B cell (primary cell): ENCODE measurements at regions of chr17 and their contacts with region 1.

Region 1: GRCh38 chr17:7280519-7281429 is 744 bp upstream of the SLC2A4 start:
- DNase-seq: peak; percentile 85
- ATAC-seq: peak; percentile 84
- H3K4me3 ChIP-seq: peak overlapping the region; percentile 2 to 69 (median 53)
- H3K4me3 Mint-ChIP-seq: peak overlapping the region; percentile 92
- H3K27ac ChIP-seq: no peak overlapping the region
- H3K27ac Mint-ChIP-seq: peak overlapping the region; percentile 76
- H3K4me1 ChIP-seq: peaks cover 20 to 31% of the 10 kb centered on the region in 2 donors
- H3K4me1 Mint-ChIP-seq: peaks cover 20% of the 10 kb centered on the region
- H3K27me3 ChIP-seq: peaks cover 0 to 46% (median 13%) of the 10 kb centered on the region in 4 experiments
- H3K27me3 Mint-ChIP-seq: peaks cover 18% of the 10 kb centered on the region
- CTCF ChIP-seq: peak; percentile 91

Region 2: DNA sequence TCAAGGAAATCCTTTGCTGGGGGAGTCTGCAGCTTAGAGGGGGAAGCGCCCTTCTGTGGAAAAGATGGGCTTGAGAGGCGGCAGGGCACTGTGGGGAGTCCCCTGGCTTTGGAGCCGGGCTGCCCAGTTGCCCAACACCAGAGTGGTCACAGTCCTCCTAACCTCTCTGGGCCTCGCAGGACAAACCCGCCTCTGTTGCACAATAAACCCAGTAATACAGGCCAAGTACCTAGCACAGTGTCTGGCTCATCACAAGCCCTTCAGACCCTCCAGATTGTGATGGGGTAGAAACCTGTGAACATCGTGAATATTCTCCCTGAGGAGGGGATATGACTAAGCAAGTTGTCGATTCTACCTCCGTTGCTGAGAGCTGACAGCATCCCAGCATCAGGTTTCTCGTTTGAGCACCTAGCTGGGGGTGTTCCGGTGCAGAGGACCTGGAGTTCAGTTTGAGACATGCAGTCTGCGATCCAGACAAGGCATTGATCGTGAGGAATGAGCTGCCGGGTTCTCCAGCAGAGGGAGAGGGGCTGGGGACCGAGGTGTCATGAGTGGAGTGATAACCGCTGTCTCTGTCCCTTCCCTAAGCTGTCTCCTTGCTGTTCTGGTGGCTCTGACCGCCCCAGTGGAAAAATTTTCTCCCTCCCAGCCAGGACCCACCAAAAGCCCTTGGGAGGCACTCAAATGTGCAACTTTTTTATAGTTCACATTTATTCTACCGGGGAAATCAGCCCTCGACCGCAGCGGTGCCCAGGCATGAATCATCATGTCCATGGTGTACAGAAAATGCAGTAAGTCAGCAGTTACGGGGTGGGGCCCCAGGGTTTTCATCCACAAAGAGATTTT is 1048.7 kb before region 1 on chr17:
- CTCF ChIA-PET with region 1: no interaction called
- POLR2A ChIA-PET with region 1: no interaction called
- intact Hi-C with region 1: no loop called
- DNase-seq: no peak
- ATAC-seq: no peak
- H3K4me3 ChIP-seq: no peak overlapping the region
- H3K4me3 Mint-ChIP-seq: no peak overlapping the region
- H3K27ac ChIP-seq: no peak overlapping the region
- H3K27ac Mint-ChIP-seq: no peak overlapping the region
- H3K4me1 ChIP-seq: no peaks in the 10 kb centered on the region
- H3K4me1 Mint-ChIP-seq: no peaks in the 10 kb centered on the region
- H3K27me3 ChIP-seq: no peaks in the 10 kb centered on the region
- H3K27me3 Mint-ChIP-seq: peaks cover 2% of the 10 kb centered on the region
- CTCF ChIP-seq: no peak

Region 3: DNA sequence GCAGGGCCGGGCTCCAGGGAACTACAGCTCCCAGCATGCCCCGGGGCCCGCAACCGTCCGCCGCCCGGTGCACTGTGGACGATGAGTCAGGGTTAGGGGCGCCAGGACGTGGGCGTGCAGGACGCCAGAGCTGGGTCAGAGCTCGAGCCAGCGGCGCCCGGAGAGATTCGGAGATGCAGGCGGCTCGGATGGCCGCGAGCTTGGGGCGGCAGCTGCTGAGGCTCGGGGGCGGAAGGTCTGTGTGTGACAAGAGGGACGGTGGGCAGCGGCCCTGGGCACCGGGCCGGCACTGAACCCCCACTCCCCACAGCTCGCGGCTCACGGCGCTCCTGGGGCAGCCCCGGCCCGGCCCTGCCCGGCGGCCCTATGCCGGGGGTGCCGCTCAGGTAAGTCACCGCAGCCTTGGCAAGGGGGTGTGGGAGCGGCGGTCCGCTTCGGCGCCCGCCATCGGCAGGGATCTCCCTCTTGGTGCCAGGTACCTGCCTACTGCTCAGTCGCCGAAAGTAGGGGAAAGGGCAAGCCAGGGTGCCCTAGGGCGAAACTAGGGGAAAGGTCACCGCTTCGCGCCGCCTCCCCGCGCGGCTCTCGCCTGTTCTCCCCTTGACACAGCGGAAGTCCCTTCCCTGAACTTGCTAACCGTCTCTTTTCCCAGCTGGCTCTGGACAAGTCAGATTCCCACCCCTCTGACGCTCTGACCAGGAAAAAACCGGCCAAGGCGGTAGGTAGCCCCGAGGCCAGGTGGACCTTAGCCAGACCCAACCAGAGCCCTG is 60.8 kb before region 1 on chr17 and contains the starts of genes ACADVL and DLG4:
- CTCF ChIA-PET with region 1: interaction called, 7 read pairs
- POLR2A ChIA-PET with region 1: no interaction called
- intact Hi-C with region 1: loop called (anchors 1 kb)
- DNase-seq: peak; percentile 78
- ATAC-seq: peak; percentile 76
- H3K4me3 ChIP-seq: peak within 1 kb of the TSS; percentile 31 to 86 (median 80)
- H3K4me3 Mint-ChIP-seq: peak within 1 kb of the TSS; percentile 97
- H3K27ac ChIP-seq: peak within 1 kb of the TSS; percentile 42 to 78
- H3K27ac Mint-ChIP-seq: peak within 1 kb of the TSS; percentile 93
- H3K4me1 ChIP-seq: peaks cover 20 to 47% of the 10 kb centered on the region in 2 donors
- H3K4me1 Mint-ChIP-seq: peaks cover 48% of the 10 kb centered on the region
- H3K27me3 ChIP-seq: no peaks in the 10 kb centered on the region
- H3K27me3 Mint-ChIP-seq: no peaks in the 10 kb centered on the region
- CTCF ChIP-seq: no peak
- total RNA-seq, gene ACADVL: 640 and 655 TPM in 2 replicates
- total RNA-seq, gene DLG4: 12.0 and 12.5 TPM in 2 replicates

Region 4: DNA sequence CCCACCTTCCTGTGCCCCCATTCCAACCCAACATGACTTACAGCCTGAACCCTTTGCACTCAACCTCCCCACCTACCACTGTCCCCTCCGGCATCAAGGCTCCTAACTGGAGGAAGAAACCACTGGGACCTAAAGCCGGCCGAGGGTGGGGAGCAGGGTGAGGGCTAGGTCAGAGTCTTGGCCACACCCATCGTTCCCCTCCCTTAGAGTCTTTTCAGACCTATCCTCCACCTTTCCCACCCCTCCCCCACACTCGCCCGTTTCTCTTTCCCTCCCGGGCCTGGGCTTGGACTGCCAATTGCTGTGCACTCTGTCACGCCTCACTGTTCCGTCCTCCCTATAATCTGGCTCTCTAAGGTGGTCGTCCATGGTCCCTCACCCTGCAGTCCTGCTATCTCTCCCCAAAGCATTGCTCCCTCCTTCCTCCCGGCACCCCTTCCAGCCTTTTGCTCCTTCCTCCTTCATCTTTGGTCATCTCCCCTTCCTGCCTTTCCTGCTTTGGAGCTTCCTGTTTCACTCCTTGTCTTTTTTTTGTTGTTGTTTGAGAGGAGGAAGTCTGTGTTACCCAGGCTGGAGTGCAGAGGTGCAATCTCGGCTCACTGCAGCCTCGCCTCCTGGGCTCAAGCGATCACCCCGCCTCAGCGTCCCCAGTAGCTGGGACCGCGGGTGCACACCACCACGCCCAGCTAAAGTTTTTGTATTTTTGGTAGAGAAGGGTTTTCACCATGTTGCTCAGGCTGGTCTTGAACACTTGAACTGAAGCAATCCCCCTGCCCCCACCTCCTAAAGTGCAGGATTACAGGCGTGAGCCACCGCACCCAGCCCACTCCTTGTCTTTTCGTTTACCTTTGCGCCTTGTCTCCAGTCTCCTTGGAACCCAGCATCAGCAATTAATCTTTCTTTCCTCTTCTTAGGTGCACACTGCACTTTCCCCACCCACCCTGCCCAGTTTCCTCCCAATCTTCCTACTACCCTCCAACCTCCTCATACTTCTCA is 17.4 kb before region 1 on chr17:
- CTCF ChIA-PET with region 1: interaction called, 3 read pairs
- POLR2A ChIA-PET with region 1: no interaction called
- intact Hi-C with region 1: loop called (anchors 2 kb)
- DNase-seq: no peak
- ATAC-seq: peak; percentile 16
- H3K4me3 ChIP-seq: peak overlapping the region in 4 of 5 experiments; percentile 20 to 38 (median 35)
- H3K4me3 Mint-ChIP-seq: peak overlapping the region; percentile 72
- H3K27ac ChIP-seq: no peak overlapping the region
- H3K27ac Mint-ChIP-seq: peak overlapping the region; percentile 66
- H3K4me1 ChIP-seq: peaks cover 27 to 32% of the 10 kb centered on the region in 2 donors
- H3K4me1 Mint-ChIP-seq: peaks cover 27% of the 10 kb centered on the region
- H3K27me3 ChIP-seq: peaks cover 0 to 17% (median 8%) of the 10 kb centered on the region in 4 experiments
- H3K27me3 Mint-ChIP-seq: peaks cover 23% of the 10 kb centered on the region
- CTCF ChIP-seq: no peak

Region 5: GRCh38 chr17:7296189-7296902 is 15.6 kb after region 1 on chr17:
- CTCF ChIA-PET with region 1: interaction called, 115 read pairs
- POLR2A ChIA-PET with region 1: interaction called, 7 read pairs
- intact Hi-C with region 1: loop called (anchors 1 kb)
- DNase-seq: peak; percentile 84
- ATAC-seq: peak; percentile 58
- H3K4me3 ChIP-seq: peak overlapping the region in 2 of 5 experiments; percentile 12 to 14
- H3K4me3 Mint-ChIP-seq: peak overlapping the region; percentile 83
- H3K27ac ChIP-seq: no peak overlapping the region
- H3K27ac Mint-ChIP-seq: peak overlapping the region; percentile 47
- H3K4me1 ChIP-seq: peaks cover 28 to 30% of the 10 kb centered on the region in 2 donors
- H3K4me1 Mint-ChIP-seq: peaks cover 22% of the 10 kb centered on the region
- H3K27me3 ChIP-seq: peaks cover 0 to 52% (median 14%) of the 10 kb centered on the region in 4 experiments
- H3K27me3 Mint-ChIP-seq: peaks cover 36% of the 10 kb centered on the region
- CTCF ChIP-seq: peak; percentile 93

Region 6: DNA sequence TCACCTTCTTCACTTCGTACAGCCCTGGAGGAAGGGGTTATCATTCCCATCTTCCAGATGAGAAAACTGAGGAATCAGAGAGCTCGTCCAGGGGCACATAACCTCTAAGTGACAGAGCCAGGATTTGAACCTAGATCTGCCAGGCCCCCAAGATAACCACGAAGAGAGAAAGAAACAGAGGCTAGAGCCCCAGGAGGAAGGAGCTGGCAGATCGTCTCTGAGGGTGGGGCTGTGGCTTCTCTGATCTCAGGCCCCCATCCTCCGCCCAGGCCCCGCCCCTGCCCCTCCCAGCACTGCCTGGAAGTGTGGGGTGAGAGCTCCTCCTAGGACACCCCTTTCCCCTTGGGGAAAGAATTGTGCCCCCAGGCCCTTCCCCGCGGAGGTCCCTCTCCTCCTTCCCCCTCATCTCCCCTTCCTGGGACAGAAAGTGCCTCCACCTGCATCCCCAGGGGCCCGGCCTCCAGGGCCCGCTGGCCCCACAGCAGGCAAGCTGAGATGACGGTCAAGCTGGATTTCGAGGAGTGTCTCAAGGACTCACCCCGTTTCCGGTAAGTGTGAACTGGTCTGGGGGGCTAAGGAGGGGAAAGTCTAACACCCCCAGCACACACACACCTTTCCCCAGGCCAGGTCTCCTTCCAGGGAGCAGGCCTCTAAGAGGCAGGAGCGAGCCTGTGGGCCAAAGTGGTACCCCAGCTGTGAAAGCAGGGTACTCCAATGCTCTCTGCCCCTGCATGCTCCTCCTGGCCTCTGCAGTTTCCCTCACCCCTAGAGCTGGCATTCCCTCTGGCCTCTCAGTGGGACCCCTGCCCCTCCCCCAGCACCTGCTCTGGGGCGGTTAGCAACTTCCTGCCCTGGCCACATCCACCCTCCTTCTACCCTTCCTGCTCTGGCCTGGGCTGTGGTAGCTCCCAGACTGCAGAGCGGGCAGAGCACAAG is 55.7 kb after region 1 on chr17 and contains the start of gene ACAP1:
- CTCF ChIA-PET with region 1: interaction called, 11 read pairs
- POLR2A ChIA-PET with region 1: no interaction called
- intact Hi-C with region 1: no loop called
- DNase-seq: peak; percentile 83
- ATAC-seq: peak; percentile 96
- H3K4me3 ChIP-seq: peak within 1 kb of the TSS; percentile 57 to 93 (median 87)
- H3K4me3 Mint-ChIP-seq: peak within 1 kb of the TSS; percentile 89
- H3K27ac ChIP-seq: peak within 1 kb of the TSS; percentile 67 to 79
- H3K27ac Mint-ChIP-seq: peak within 1 kb of the TSS; percentile 96
- H3K4me1 ChIP-seq: peaks cover 25 to 64% of the 10 kb centered on the region in 2 donors
- H3K4me1 Mint-ChIP-seq: peaks cover 47% of the 10 kb centered on the region
- H3K27me3 ChIP-seq: no peaks in the 10 kb centered on the region
- H3K27me3 Mint-ChIP-seq: no peaks in the 10 kb centered on the region
- CTCF ChIP-seq: no peak
- total RNA-seq, gene ACAP1: 371 and 392 TPM in 2 replicates

Region 7: DNA sequence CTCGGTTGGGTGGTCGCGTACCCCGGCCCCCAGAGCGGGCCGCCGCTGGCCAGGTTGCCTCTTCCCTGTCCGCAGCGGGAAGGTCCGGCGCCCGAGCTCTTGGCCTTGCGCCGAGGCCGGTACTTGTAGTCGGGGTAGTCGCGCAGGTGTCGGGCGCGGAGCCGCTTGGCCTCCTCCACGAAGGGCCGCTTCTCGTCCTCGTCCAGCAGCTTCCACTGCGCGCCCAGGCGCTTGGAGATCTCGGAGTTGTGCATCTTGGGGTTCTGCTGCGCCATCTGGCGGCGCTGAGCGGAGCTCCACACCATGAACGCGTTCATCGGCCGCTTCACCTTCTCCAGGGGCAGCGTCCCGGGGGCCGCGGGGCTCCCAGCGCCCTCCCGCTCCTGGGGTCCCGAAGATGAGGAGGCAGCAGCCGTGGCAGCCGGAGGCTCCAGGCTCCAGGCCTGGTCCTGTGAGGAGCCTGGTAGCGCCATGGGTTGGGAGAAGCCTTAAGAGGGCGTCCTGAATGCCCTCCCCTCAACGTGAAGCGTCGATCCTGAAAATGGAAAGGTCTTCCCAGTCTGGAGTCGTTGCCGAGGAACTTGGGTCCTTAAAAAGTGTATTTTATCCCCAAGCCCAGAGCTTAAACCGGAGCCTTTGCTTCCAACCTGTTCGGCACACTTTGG is 308.6 kb after region 1 on chr17:
- CTCF ChIA-PET with region 1: no interaction called
- POLR2A ChIA-PET with region 1: no interaction called
- intact Hi-C with region 1: loop called (anchors 1 kb)
- DNase-seq: peak; percentile 84
- ATAC-seq: peak; percentile 86
- H3K4me3 ChIP-seq: no peak overlapping the region
- H3K4me3 Mint-ChIP-seq: no peak overlapping the region
- H3K27ac ChIP-seq: no peak overlapping the region
- H3K27ac Mint-ChIP-seq: no peak overlapping the region
- H3K4me1 ChIP-seq: peaks cover 7 to 21% of the 10 kb centered on the region in 2 donors
- H3K4me1 Mint-ChIP-seq: peaks cover 10% of the 10 kb centered on the region
- H3K27me3 ChIP-seq: no peaks in the 10 kb centered on the region
- H3K27me3 Mint-ChIP-seq: no peaks in the 10 kb centered on the region
- CTCF ChIP-seq: peak; percentile 91